Ascending aorta (tissue), 2 donors: ENCODE measurements at regions of chr17 and their contacts with region 1.

Region 1: GRCh38 chr17:13017659-13018459 is at the start of gene ELAC2:
- DNase-seq: peak; percentile 93 to 99
- H3K4me3 ChIP-seq: peak within 1 kb of the TSS; percentile 98 to 99
- H3K27ac ChIP-seq: peak within 1 kb of the TSS; percentile 78 to 83
- H3K4me1 ChIP-seq: peaks cover 0 to 14% of the 10 kb centered on the region in 2 donors
- H3K27me3 ChIP-seq: no peaks in the 10 kb centered on the region
- CTCF ChIP-seq: peak in 1 of 3 experiments; percentile 16
- total RNA-seq, gene ELAC2: 190 TPM

Region 2: DNA sequence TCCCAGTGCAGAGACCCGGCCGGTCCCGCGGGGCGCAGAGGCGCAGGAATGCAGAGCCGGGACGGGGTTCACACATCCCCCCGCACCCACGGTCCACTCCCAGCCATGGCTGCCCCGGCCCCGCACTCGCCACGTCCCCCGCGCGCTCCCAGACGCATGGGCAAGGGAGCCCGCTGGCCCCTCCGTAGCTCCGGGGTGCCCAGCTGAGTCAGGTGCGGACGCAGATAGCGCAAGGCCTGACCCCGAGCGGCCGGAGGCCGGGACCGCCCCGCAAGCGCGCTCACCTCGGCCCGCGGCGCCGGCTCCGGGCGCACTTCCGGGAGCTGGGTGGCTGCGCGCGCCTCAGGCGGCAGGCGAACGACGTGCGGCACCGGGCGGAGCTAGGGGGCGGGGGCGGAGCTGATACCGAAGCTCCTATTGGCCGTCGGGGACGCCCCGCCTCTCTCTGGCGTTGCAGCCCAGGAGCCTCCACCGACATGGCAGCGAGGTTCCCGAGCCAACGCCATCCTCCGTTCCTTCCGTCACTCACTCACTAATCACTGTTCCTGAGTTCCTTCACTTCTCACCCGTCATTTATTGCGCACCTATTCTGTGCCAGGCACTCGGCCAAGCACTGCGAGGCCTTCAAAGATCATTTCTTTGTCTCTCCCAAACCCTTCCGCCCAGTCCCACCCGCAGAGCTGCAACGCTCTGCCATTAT is 1020.6 kb before region 1 on chr17 and contains the start of gene ZNF18:
- intact Hi-C with region 1: loop called (anchors 1 kb)
- DNase-seq: peak; percentile 82 to 97
- H3K4me3 ChIP-seq: peak within 1 kb of the TSS; percentile 71 to 97
- H3K27ac ChIP-seq: peak within 1 kb of the TSS; percentile 87 to 88
- H3K4me1 ChIP-seq: peaks cover 0 to 8% of the 10 kb centered on the region in 2 donors
- H3K27me3 ChIP-seq: no peaks in the 10 kb centered on the region
- CTCF ChIP-seq: no peak
- total RNA-seq, gene ZNF18: 11.6 TPM

Region 3: GRCh38 chr17:12789075-12789776 is 228.6 kb before region 1 on chr17 and contains the start of gene ARHGAP44:
- intact Hi-C with region 1: loop called (anchors 10 kb)
- DNase-seq: peak in 1 of 2 donors; percentile 80
- H3K4me3 ChIP-seq: peak within 1 kb of the TSS; percentile 72 to 74
- H3K27ac ChIP-seq: peak within 1 kb of the TSS; percentile 49 to 81
- H3K4me1 ChIP-seq: peaks cover 0 to 6% of the 10 kb centered on the region in 2 donors
- H3K27me3 ChIP-seq: no peaks in the 10 kb centered on the region
- CTCF ChIP-seq: no peak
- total RNA-seq, gene ARHGAP44: 19.3 TPM

Region 4: DNA sequence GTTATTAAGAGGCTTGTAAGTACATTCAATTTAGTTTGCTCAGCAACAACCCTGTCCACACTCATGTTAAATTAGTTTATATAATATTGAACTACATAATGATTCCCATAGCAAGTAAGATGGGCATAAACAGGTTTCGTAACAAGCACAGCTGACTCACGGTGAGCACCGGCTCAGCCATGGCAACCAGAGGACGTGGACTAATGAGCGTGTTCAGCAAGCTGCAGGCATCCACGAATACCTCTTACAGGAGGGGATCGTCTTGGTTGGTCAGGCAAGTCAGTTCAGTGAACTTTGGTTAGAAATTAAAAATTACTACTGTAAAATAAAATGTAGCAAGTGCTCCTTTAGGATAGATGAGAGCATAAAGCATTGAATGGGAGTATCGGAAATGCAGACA is 58.4 kb before region 1 on chr17:
- intact Hi-C with region 1: no loop called
- DNase-seq: no peak
- H3K4me3 ChIP-seq: no peak overlapping the region
- H3K27ac ChIP-seq: no peak overlapping the region
- H3K4me1 ChIP-seq: no peaks in the 10 kb centered on the region
- H3K27me3 ChIP-seq: no peaks in the 10 kb centered on the region
- CTCF ChIP-seq: no peak

Region 5: GRCh38 chr17:13200671-13201070 is 182.8 kb after region 1 on chr17:
- intact Hi-C with region 1: no loop called
- DNase-seq: no peak
- H3K4me3 ChIP-seq: no peak overlapping the region
- H3K27ac ChIP-seq: no peak overlapping the region
- H3K4me1 ChIP-seq: no peaks in the 10 kb centered on the region
- H3K27me3 ChIP-seq: no peaks in the 10 kb centered on the region
- CTCF ChIP-seq: no peak